Activated B cell treated with CpG ODN at 0.5 μM for 24 hours (primary cell): ENCODE measurements at regions of chr21 and their contacts with region 1.

Region 1: DNA sequence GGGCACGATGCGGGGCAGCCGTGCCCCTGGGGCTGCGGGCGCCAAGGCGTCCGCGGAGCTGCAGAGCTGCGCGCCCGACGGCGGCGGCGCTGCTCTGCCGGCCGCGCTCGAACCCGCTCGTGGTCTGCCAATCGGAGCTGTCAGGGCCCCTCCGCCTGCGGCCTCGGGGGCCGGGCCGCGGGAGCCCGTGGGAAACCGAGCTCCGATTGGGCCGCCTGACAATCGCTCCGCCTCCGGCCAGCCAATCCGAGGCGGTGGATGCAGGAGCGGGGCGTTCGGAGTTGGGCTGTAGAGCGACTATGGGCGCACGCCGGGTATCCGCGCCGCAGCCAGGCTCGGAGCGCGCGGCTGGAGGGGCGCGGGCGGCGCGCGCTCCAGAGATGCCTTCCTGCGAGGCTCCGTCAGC is 100.5 kb upstream of the SOD1 start:
- DNase-seq: peak; percentile 80
- ATAC-seq: peak; percentile 90
- H3K4me3 Mint-ChIP-seq: peak overlapping the region; percentile 93
- H3K27ac Mint-ChIP-seq: no peak overlapping the region
- H3K4me1 Mint-ChIP-seq: peaks cover 24% of the 10 kb centered on the region
- H3K27me3 Mint-ChIP-seq: peaks cover 30% of the 10 kb centered on the region
- CTCF ChIP-seq: no peak

Region 2: GRCh38 chr21:31509194-31510017 is 49.6 kb before region 1 on chr21:
- CTCF ChIA-PET with region 1: no interaction called
- POLR2A ChIA-PET with region 1: interaction called, 3 read pairs
- intact Hi-C with region 1: loop called (anchors 1 kb)
- DNase-seq: no peak
- ATAC-seq: peak; percentile 41
- H3K4me3 Mint-ChIP-seq: no peak overlapping the region
- H3K27ac Mint-ChIP-seq: no peak overlapping the region
- H3K4me1 Mint-ChIP-seq: peaks cover 37% of the 10 kb centered on the region
- H3K27me3 Mint-ChIP-seq: no peaks in the 10 kb centered on the region
- CTCF ChIP-seq: no peak

Region 3: GRCh38 chr21:31772674-31773555 is 213.9 kb after region 1 on chr21:
- CTCF ChIA-PET with region 1: no interaction called
- POLR2A ChIA-PET with region 1: interaction called, 5 read pairs
- intact Hi-C with region 1: loop called (anchors 10 kb)
- DNase-seq: peak; percentile 46
- ATAC-seq: peak; percentile 86
- H3K4me3 Mint-ChIP-seq: peak overlapping the region; percentile 76
- H3K27ac Mint-ChIP-seq: peak overlapping the region; percentile 98
- H3K4me1 Mint-ChIP-seq: peaks cover 61% of the 10 kb centered on the region
- H3K27me3 Mint-ChIP-seq: no peaks in the 10 kb centered on the region
- CTCF ChIP-seq: no peak